ENCODE measurements at regions of chr7 and their contacts with region 1.

Region 1: GRCh38 chr7:143240291-143241168 is 18.7 kb downstream of the TAS2R40 start:
- DNase-seq: peak in 4 of 5 donors; percentile 53 to 72 (median 61)
- ATAC-seq: peak; percentile 71 to 91 (median 88)
- H3K4me3 ChIP-seq: peak overlapping the region in 1 of 12 donors; percentile 8
- H3K27ac ChIP-seq: peak overlapping the region in 2 of 12 donors; percentile 5 to 83
- H3K4me1 ChIP-seq: peaks cover 0 to 43% (median 3%) of the 10 kb centered on the region in 12 donors
- H3K27me3 ChIP-seq: no peaks in the 10 kb centered on the region
- CTCF ChIP-seq: peak; percentile 90 to 98 (median 94)
- POLR2A ChIP-seq: no peak

Region 2: DNA sequence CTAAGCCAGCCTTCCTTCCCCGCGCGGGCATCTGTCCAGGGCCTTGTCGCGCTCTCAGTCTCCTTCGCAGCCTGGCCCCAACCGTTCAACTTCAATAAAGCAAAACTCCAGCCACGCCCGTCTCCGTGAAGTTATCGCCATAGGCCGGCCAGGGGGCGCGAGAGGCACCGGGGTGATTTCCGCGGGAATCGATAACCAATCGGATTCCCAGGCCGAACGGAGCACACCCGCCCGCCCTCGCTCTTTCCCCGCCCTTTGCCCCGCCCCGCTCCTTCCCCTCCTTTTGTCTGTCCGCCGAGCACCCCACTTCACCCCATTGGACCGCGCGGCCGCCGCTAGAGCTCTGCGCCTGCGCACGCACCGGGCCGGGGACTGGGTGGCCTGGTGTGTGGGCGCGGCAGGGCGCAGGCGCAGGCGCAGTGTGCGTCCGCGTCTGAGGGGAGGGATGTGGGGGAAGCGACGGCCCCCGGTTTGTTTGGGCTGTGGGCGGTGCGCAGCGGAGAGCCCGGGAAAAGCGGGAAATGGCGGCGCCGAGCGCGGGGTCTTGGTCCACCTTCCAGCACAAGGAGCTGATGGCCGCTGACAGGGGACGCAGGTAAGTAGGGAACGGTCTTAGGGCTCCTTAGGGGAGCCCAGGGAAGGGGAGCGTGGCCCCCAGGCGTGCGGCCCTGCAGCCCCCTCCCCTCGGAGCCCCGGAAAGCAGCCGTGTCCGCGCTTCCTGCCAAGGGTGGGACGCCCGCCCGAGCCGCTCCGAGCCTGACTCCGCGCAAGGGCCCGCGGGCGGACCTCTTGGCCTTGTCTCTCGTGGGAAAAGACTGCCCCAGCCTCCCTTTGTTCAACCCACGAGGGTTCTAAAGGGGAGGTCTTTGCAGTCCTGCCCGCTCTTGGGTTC is 47.7 kb after region 1 on chr7 and contains the start of gene CASP2:
- intact Hi-C with region 1: loop called in 1 of 10 experiments (anchors 5 kb)
- DNase-seq: peak; percentile 99
- ATAC-seq: peak; percentile 96 to 98 (median 97)
- H3K4me3 ChIP-seq: peak within 1 kb of the TSS; percentile 60 to 99 (median 86)
- H3K27ac ChIP-seq: peak within 1 kb of the TSS; percentile 76 to 97 (median 93)
- H3K4me1 ChIP-seq: peaks cover 0 to 60% (median 41%) of the 10 kb centered on the region in 12 donors
- H3K27me3 ChIP-seq: no peaks in the 10 kb centered on the region
- CTCF ChIP-seq: peak in 11 of 12 donors; percentile 13 to 66 (median 46)
- POLR2A ChIP-seq: peak in 1 of 2 donors; percentile 70
- total RNA-seq, gene CASP2: 7.4 to 18.3 (median 13.8) TPM

Region 3: GRCh38 chr7:143358626-143359025 is 118.1 kb after region 1 on chr7:
- intact Hi-C with region 1: no loop called
- DNase-seq: no peak
- ATAC-seq: no peak
- H3K4me3 ChIP-seq: no peak overlapping the region
- H3K27ac ChIP-seq: no peak overlapping the region
- H3K4me1 ChIP-seq: peaks cover 0 to 18% (median 4%) of the 10 kb centered on the region in 12 donors
- H3K27me3 ChIP-seq: peaks cover 5 to 47% (median 27%) of the 10 kb centered on the region in 9 donors
- CTCF ChIP-seq: no peak
- POLR2A ChIP-seq: no peak

Region 4: DNA sequence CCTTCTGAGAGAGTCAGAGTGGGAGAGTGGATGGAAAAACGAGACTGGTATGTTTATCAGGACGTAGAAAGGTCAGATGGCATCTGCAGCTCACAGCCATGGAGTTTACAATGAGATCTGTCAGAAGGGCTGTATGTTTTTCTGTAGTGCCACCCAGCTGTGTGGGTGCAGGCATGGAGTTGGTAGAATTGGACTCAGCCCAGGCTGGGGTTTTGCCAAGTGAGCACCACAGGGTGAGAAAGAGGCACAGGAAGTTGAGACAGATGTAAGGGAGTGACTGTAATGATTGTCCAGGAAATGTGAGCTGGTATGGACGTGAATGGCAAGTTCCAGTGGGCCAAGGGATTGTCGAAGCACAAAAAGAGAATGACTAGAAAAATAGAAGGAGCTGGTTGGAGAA is 131.5 kb after region 1 on chr7:
- intact Hi-C with region 1: loop called in 2 of 10 experiments (anchors 5 kb)
- DNase-seq: peak in 3 of 5 donors; percentile 64 to 73 (median 67)
- ATAC-seq: peak in 3 of 4 donors; percentile 64 to 76 (median 74)
- H3K4me3 ChIP-seq: no peak overlapping the region
- H3K27ac ChIP-seq: peak overlapping the region in 1 of 12 donors; percentile 70
- H3K4me1 ChIP-seq: peaks cover 0 to 56% (median 0%) of the 10 kb centered on the region in 12 donors
- H3K27me3 ChIP-seq: no peaks in the 10 kb centered on the region
- CTCF ChIP-seq: peak in 3 of 12 donors; percentile 25 to 34 (median 26)
- POLR2A ChIP-seq: no peak

Region 5: GRCh38 chr7:143416565-143417149 is 176.1 kb after region 1 on chr7:
- intact Hi-C with region 1: loop called in 9 of 10 experiments (anchors 1 to 5 kb)
- DNase-seq: no peak
- ATAC-seq: peak in 1 of 4 donors; percentile 52
- H3K4me3 ChIP-seq: no peak overlapping the region
- H3K27ac ChIP-seq: no peak overlapping the region
- H3K4me1 ChIP-seq: peaks cover 0 to 24% (median 0%) of the 10 kb centered on the region in 12 donors
- H3K27me3 ChIP-seq: peaks cover 0 to 36% (median 0%) of the 10 kb centered on the region in 9 donors
- CTCF ChIP-seq: peak; percentile 73 to 90 (median 84)
- POLR2A ChIP-seq: no peak

Region 6: DNA sequence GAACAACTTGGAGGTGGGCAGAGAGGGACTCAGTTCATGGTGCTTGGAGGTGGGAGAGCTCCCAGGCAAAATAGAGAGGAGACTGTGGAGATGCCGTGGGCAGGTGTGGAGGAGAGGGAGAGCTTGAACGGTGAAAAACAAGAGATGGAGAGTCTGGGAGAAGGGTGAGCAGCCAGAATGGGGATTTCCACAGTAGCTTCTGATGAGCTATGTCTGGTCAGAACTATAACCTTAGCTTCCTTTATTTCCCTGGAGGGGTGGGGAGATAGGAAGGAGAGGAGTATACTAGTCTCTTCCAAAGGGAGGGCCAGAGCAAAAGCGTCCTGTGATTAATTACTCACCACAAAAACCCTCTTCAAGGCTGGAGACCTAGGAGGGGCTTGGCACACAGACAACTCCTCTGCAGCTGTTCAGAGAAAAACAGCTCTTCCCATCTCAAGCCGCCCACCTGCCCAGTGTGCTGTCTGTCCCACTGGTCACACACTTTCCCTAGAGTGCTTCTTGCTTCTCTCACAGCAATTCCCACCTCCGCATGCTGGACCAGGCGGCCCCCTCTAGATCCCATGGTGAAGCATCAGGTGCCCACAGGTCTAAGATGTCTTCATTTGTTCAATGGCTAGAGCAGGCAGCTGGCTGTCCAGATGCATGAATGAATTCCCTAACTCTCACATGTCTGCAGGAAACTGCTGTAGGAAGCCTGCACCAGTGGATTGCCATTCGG is 279.0 kb after region 1 on chr7:
- intact Hi-C with region 1: loop called in 1 of 10 experiments (anchors 10 kb)
- DNase-seq: peak; percentile 49 to 72 (median 60)
- ATAC-seq: peak in 3 of 4 donors; percentile 25 to 79 (median 63)
- H3K4me3 ChIP-seq: no peak overlapping the region
- H3K27ac ChIP-seq: peak overlapping the region in 3 of 12 donors; percentile 10 to 55 (median 17)
- H3K4me1 ChIP-seq: peaks cover 0 to 13% (median 2%) of the 10 kb centered on the region in 12 donors
- H3K27me3 ChIP-seq: no peaks in the 10 kb centered on the region
- CTCF ChIP-seq: no peak
- POLR2A ChIP-seq: no peak

Measured in heart left ventricle (tissue), 16 donors.